Common myeloid progenitor, CD34-positive (primary cell): ENCODE measurements at regions of chr19 and their contacts with region 1.

Region 1: GRCh38 chr19:54325194-54325621 is 12.2 kb upstream of the LILRA5 start:
- DNase-seq: peak; percentile 58 to 81 (median 68)
- H3K4me3 ChIP-seq: no peak overlapping the region
- H3K27ac ChIP-seq: no peak overlapping the region
- H3K4me1 ChIP-seq: peaks cover 0 to 21% (median 8%) of the 10 kb centered on the region in 4 experiments
- H3K27me3 ChIP-seq: no peaks in the 10 kb centered on the region

Region 2: GRCh38 chr19:54159352-54160181 is 165.6 kb before region 1 on chr19 and contains the start of gene LENG1:
- CTCF ChIA-PET with region 1: no interaction called
- POLR2A ChIA-PET with region 1: no interaction called
- DNase-seq: peak; percentile 100
- H3K4me3 ChIP-seq: peak within 1 kb of the TSS; percentile 54 to 94 (median 83)
- H3K27ac ChIP-seq: peak within 1 kb of the TSS; percentile 70 to 90
- H3K4me1 ChIP-seq: peaks cover 5 to 58% (median 43%) of the 10 kb centered on the region in 4 experiments
- H3K27me3 ChIP-seq: peaks cover 0 to 10% (median 0%) of the 10 kb centered on the region in 5 experiments

Region 3: DNA sequence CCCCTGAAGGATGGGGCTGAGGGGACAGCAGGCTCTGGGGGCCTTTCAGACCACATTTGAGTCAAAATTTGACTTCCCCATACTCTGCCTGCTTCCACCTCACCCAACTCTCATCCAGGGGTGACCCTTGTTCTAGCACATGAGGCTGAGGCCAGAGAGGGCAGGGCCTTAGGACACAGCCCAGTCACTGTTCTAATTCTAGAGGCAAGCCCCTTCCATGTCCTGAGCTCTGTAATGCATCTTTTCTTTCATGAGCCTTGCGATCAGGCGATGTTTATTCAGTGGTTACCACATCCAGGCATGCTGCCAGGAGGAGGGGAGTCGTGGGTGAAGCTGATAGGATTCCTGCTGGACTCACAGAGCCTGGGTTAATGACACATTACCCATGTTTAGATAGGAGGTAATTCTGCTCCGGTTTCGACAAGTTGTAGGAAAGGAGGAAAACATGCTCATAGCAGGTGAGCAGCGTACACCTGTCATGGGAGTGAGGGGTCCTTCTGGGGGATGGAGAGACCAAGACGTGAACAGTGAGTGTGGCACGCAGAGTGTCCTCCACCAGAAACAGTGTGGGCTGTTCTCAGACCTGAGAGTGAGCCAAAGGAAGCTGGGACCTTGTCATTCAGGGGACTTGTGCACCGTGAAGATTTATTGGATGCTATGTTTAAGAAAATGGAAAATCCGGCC is 115.3 kb before region 1 on chr19:
- CTCF ChIA-PET with region 1: no interaction called
- POLR2A ChIA-PET with region 1: no interaction called
- DNase-seq: peak; percentile 90 to 95 (median 93)
- H3K4me3 ChIP-seq: peak overlapping the region in 5 of 7 experiments; percentile 13 to 57 (median 21)
- H3K27ac ChIP-seq: peak overlapping the region; percentile 85 to 86
- H3K4me1 ChIP-seq: peaks cover 22 to 79% (median 67%) of the 10 kb centered on the region in 4 experiments
- H3K27me3 ChIP-seq: no peaks in the 10 kb centered on the region

Region 4: DNA sequence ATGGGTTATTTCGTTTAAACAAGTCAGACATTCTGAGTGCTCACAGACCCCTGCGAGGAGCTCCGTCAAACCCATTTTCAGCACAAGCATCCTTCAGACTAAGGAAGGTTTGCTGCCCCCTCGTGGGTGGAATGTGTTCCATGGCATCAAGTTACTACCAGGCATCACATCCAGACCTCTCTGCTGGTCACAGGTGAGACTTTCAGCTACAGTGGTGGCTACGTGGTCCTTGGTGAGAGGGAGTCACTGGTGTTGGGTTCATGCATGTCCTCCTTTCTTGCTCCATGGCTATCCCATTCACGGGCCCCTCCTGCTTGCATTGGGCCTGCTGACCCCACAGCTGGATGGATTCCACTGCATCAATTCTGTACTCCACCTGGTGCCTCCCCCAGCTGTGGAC is 59.1 kb before region 1 on chr19:
- CTCF ChIA-PET with region 1: interaction called, 11 read pairs
- POLR2A ChIA-PET with region 1: no interaction called
- DNase-seq: peak; percentile 80 to 91 (median 86)
- H3K4me3 ChIP-seq: no peak overlapping the region
- H3K27ac ChIP-seq: no peak overlapping the region
- H3K4me1 ChIP-seq: peaks cover 0 to 2% (median under 1%) of the 10 kb centered on the region in 4 experiments
- H3K27me3 ChIP-seq: no peaks in the 10 kb centered on the region

Region 5: DNA sequence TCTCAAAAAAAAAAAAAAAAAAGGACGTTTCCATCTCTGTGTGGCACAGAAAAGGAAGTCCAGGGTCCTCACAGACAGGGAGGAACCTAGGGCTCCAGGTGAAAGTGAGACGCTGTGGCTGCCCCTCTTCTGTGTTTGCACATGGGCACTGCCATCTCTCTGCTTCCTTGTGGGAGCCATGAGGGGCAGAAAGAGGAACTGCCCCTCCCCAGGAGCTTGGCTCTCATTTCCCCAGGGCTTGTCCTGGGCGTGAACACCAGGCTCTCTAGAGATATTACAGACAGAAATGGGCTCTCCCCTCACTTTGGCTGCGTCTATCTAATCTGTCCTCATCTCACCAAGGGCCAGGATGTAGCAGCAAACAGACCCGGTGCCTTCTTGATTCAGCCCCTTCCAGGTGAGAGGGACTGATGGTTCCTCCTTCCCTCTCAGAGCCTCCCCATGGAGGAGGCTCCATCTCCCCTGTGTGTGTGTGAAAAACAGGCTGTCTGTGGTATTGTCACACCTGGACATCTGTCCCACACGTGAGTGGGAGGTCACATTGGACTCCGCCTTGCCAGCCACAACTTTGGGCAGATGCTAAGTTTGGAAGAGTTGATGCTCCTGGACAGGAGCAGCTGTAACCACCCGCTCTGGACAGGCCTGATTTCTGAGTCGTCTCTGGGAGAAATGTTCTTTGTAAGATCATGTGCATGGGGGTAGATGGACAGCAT is 14.6 kb after region 1 on chr19:
- CTCF ChIA-PET with region 1: interaction called, 17 read pairs
- POLR2A ChIA-PET with region 1: no interaction called
- DNase-seq: peak; percentile 61 to 81 (median 80)
- H3K4me3 ChIP-seq: peak overlapping the region in 1 of 7 experiments; percentile 20
- H3K27ac ChIP-seq: no peak overlapping the region
- H3K4me1 ChIP-seq: peaks cover 6 to 19% (median 13%) of the 10 kb centered on the region in 4 experiments
- H3K27me3 ChIP-seq: no peaks in the 10 kb centered on the region